Tibial artery (tissue), 4 donors: ENCODE measurements at regions of chr16 and their contacts with region 1.

Region 1: DNA sequence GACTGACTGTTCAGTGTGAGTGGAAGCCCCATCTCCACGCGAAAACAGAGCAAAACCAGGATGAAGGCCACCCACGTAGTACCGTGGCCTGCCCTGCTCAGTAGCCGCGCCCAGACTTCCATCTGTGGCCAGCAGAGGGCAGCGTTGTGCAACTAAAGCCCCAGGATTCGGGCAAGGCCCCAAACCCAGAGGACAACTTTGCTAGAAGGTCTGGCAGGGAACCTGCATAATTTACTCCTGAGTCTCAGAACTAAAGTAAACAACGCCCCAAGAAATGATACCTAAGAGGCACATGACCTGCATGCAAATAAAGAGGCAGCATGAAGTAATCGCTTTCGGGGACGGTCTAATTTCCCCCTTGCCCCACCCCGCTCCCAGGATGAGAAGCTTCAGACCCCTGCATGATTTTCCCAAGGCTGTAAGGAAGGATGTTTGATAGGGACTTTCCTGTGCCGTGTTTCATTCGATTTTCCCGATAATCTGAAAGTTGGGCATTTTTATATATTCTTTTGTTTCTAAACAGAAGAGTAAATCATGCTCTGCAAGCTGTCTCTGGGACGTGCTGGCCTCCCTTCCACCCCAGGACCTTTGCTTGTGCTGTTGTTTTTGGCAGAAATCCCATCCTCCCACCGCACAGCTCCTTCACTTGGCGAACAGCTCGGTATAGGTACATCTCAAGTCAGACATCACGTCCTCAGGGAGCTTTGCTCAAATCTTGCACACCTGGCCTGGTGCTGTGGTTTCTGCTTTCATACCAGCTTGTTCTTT is 18.6 kb downstream of the HSBP1 start:
- DNase-seq: peak; percentile 80 to 86
- H3K4me3 ChIP-seq: no peak overlapping the region
- H3K27ac ChIP-seq: no peak overlapping the region
- H3K4me1 ChIP-seq: peaks cover 0 to 3% (median 0%) of the 10 kb centered on the region in 4 donors
- H3K27me3 ChIP-seq: no peaks in the 10 kb centered on the region
- CTCF ChIP-seq: peak; percentile 86 to 89

Region 2: DNA sequence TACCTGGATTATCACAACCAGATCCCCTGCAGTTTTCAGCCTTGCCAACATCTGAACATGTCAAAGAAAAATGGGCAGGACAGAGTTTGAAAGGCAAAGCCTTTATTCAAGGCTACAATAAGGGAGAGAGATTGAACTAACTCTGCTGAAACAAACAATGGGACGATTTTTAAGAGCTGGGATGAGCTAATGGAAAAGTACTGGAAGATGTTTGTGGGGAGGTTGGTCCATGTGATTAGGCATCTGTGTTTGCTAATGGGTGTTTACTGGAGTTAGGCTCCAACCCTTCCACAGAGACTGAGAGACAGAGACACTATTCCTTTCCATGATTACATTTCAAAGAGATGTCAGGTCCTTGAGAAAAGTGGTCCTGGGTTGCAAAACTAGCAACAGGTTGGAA is 53.5 kb before region 1 on chr16:
- intact Hi-C with region 1: loop called (anchors 2 kb)
- DNase-seq: no peak
- H3K4me3 ChIP-seq: no peak overlapping the region
- H3K27ac ChIP-seq: no peak overlapping the region
- H3K4me1 ChIP-seq: peaks cover 0 to 7% (median 3%) of the 10 kb centered on the region in 4 donors
- H3K27me3 ChIP-seq: no peaks in the 10 kb centered on the region
- CTCF ChIP-seq: no peak

Region 3: DNA sequence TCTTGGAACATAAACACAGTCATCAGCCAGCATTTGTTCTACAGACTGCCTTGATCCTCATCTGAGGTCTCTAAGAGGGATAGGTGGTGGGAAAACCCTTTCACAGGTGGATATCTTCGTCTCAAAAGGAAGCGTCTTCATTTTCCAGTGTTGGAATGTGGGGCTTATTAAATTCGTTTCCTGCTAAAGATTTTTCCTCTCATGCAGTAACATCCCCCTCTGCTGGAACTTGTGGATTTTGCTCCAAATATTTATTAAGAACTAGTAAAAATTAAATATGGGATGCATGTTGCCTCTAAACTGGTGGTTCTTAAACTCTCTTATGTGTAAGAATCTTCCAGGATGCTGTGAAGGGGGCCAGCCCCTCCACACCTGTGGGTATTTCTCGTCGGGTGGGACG is 52.5 kb after region 1 on chr16:
- intact Hi-C with region 1: loop called (anchors 10 kb)
- DNase-seq: no peak
- H3K4me3 ChIP-seq: no peak overlapping the region
- H3K27ac ChIP-seq: no peak overlapping the region
- H3K4me1 ChIP-seq: no peaks in the 10 kb centered on the region
- H3K27me3 ChIP-seq: no peaks in the 10 kb centered on the region
- CTCF ChIP-seq: peak; percentile 52 to 57

Region 4: GRCh38 chr16:84062734-84063640 is 236.7 kb after region 1 on chr16:
- intact Hi-C with region 1: loop called (anchors 10 kb)
- DNase-seq: peak; percentile 75 to 79
- H3K4me3 ChIP-seq: no peak overlapping the region
- H3K27ac ChIP-seq: peak overlapping the region in 1 of 2 donors; percentile 3
- H3K4me1 ChIP-seq: no peaks in the 10 kb centered on the region
- H3K27me3 ChIP-seq: no peaks in the 10 kb centered on the region
- CTCF ChIP-seq: peak; percentile 74 to 76